K562 (cell line): ENCODE measurements at regions of chr16 and their contacts with region 1.

Region 1: GRCh38 chr16:58336332-58337089 is 41.7 kb upstream of the PRSS54 start:
- DNase-seq: peak; percentile 76 to 89 (median 82)
- ATAC-seq: peak; percentile 94
- H3K4me3 ChIP-seq: no peak overlapping the region
- H3K27ac ChIP-seq: no peak overlapping the region
- H3K4me1 ChIP-seq: 0 out of 5 replicates have a peak, but pooled peaks cover 0 to 2% of the 10 kb centered on the region in 2 experiments
- H3K27me3 ChIP-seq: no peaks in the 10 kb centered on the region
- CTCF ChIP-seq: peak; percentile 95 to 99 (median 99)
- EP300 ChIP-seq: peak; percentile 28; the same call in 1 of the 2 replicates
- POLR2A ChIP-seq: no peak
- RAD21 ChIP-seq: peak; percentile 96 to 97

Region 2: DNA sequence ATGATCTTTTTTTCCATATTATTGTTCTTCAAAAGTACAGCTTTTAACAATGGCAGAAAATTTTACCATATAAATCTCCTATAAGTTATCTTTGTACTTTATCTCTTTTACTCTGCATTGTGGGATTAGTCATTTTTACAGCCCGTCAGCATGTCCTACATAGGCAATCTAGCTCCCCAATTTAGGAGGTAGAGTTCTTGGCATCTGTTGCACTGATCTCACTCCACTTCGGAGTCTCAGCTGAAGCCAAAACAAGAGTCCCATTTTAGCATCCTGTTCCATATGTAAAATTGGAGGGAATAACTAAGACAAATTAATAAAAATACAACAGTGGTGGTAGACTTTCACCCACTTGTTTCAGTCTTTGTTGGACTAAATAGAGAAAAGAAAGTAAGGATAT is 10.6 kb before region 1 on chr16:
- CTCF ChIA-PET with region 1: no interaction called
- POLR2A ChIA-PET with region 1: no interaction called
- in situ Hi-C with region 1: no loop called
- intact Hi-C with region 1: no loop called
- DNase-seq: no peak
- ATAC-seq: no peak
- H3K4me3 ChIP-seq: no peak overlapping the region
- H3K27ac ChIP-seq: no peak overlapping the region
- H3K4me1 ChIP-seq: no peaks in the 10 kb centered on the region; a peak in 1 of 5 replicates
- H3K27me3 ChIP-seq: peaks cover 4% of the 10 kb centered on the region in 2 experiments; a peak in 3 of 5 replicates
- CTCF ChIP-seq: no peak
- EP300 ChIP-seq: no peak
- POLR2A ChIP-seq: no peak
- RAD21 ChIP-seq: no peak

Region 3: DNA sequence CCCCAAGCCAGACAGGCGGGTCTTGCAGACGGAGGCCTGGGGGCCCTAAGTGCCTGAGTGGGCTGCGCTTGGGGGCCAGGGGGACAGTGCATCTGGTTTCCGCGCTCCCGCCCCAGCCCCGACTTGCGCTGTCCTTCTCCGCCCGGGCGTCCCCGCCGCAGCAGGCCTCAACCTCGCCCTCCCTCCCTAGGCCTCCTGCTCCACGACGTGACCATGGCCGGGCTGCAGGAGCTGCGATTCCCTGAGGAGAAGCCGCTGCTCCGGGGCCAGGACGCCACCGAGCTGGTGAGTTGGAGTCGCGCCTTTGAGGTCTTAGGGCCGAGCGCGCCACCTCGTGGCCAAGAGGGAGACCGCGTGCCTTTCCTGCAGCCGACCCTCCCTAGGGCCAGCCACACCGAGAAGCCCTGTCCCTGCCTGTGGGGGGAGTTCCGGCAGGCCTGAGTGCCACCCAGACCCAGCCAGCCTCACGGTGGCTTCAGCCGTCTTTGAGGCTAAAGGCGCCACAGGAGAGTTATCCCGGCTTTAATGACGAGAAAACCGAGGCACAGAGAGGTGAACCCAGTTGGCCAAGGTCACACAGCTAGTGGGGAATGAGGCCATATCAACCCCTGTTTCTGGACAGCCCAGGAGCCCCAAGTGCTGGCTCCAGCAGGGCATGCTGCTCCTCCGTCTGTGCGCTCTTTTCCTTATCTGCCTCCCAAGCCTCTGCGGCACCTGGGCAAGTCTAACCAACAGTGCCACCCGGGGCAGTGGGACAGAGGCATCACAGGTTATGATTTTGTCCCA is 151.2 kb after region 1 on chr16:
- CTCF ChIA-PET with region 1: interaction called, 59 read pairs
- POLR2A ChIA-PET with region 1: interaction called, 7 read pairs
- in situ Hi-C with region 1: loop called (anchors 5 kb)
- intact Hi-C with region 1: loop called (anchors 1 kb)
- DNase-seq: peak; percentile 83 to 87 (median 84)
- ATAC-seq: peak; percentile 97
- H3K4me3 ChIP-seq: no peak overlapping the region
- H3K27ac ChIP-seq: no peak overlapping the region
- H3K4me1 ChIP-seq: peaks cover 10 to 24% of the 10 kb centered on the region in 2 experiments; a peak in 4 of 5 replicates
- H3K27me3 ChIP-seq: peaks cover 0 to 38% of the 10 kb centered on the region in 2 experiments; a peak in 3 of 5 replicates
- CTCF ChIP-seq: peak; percentile 90 to 97 (median 92)
- EP300 ChIP-seq: no peak
- POLR2A ChIP-seq: no peak
- RAD21 ChIP-seq: peak; percentile 94 to 98

Region 4: GRCh38 chr16:58494981-58495520 is 158.5 kb after region 1 on chr16:
- CTCF ChIA-PET with region 1: interaction called, 59 read pairs
- POLR2A ChIA-PET with region 1: no interaction called
- in situ Hi-C with region 1: loop called (anchors 5 kb)
- intact Hi-C with region 1: no loop called
- DNase-seq: peak; percentile 86 to 92 (median 90)
- ATAC-seq: peak; percentile 87
- H3K4me3 ChIP-seq: no peak overlapping the region
- H3K27ac ChIP-seq: no peak overlapping the region
- H3K4me1 ChIP-seq: peaks cover 3 to 38% of the 10 kb centered on the region in 2 experiments; a peak in 4 of 5 replicates
- H3K27me3 ChIP-seq: peaks cover 0 to 33% of the 10 kb centered on the region in 2 experiments; a peak in 3 of 5 replicates
- CTCF ChIP-seq: peak; percentile 54 to 79 (median 77)
- EP300 ChIP-seq: no peak
- POLR2A ChIP-seq: no peak
- RAD21 ChIP-seq: peak in 1 of 2 experiments; percentile 28; a peak in 1 of 4 replicates

Region 5: GRCh38 chr16:58661199-58661830 is 324.8 kb after region 1 on chr16:
- CTCF ChIA-PET with region 1: no interaction called
- POLR2A ChIA-PET with region 1: no interaction called
- in situ Hi-C with region 1: no loop called
- intact Hi-C with region 1: loop called (anchors 2 kb)
- DNase-seq: peak; percentile 51 to 84 (median 64)
- ATAC-seq: peak; percentile 94
- H3K4me3 ChIP-seq: no peak overlapping the region
- H3K27ac ChIP-seq: no peak overlapping the region
- H3K4me1 ChIP-seq: peaks cover 0 to 5% of the 10 kb centered on the region in 2 experiments; a peak in 3 of 5 replicates
- H3K27me3 ChIP-seq: 0 out of 5 replicates have a peak, but pooled peaks cover 0 to 5% of the 10 kb centered on the region in 2 experiments
- CTCF ChIP-seq: peak; percentile 71 to 89 (median 81)
- EP300 ChIP-seq: no peak
- POLR2A ChIP-seq: no peak
- RAD21 ChIP-seq: peak; percentile 84 to 88

Region 6: DNA sequence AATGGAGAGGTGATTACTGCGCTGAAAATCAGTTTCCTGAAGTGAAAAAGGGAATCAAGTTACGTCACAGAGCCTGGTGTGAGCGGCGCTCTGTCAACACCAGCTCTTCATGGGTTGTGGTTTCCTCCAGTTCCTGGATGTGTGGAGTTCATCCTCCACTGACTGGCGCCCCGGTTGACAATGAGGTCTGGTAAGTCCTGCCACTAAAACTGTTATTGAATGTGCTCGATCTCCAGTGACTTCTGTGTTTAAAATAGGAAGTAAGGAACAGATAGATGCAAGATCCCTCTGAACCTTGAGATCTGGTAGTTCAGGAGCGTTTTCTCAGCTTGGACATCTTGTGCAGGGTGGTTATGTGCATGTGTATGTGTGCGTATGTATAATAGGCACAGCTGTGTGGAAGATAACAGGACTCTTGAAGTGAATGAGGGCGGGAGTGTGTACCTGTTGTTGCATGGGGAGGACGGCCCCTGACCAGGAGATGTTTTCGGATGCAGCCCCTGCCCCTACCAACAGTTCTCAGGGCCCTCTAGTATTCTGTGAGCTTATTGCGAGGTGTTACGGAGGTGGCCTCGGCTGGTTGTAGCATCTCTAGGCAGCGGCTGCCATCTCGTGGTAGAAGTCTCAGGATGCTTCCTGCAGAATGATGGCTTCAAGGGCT is 419.6 kb after region 1 on chr16:
- CTCF ChIA-PET with region 1: interaction called, 3 read pairs
- POLR2A ChIA-PET with region 1: no interaction called
- in situ Hi-C with region 1: loop called (anchors 5 kb)
- intact Hi-C with region 1: loop called (anchors 2 kb)
- DNase-seq: peak; percentile 54 to 86 (median 64)
- ATAC-seq: peak; percentile 98
- H3K4me3 ChIP-seq: no peak overlapping the region
- H3K27ac ChIP-seq: no peak overlapping the region
- H3K4me1 ChIP-seq: peaks cover 0 to 6% of the 10 kb centered on the region in 2 experiments; a peak in 3 of 5 replicates
- H3K27me3 ChIP-seq: peaks cover 0 to 9% of the 10 kb centered on the region in 2 experiments; a peak in 3 of 5 replicates
- CTCF ChIP-seq: peak; percentile 80 to 89 (median 87)
- EP300 ChIP-seq: no peak
- POLR2A ChIP-seq: no peak
- RAD21 ChIP-seq: peak; percentile 79 to 88